Cardiac septum (tissue), 1 donor: ENCODE measurements at regions of chr11 and their contacts with region 1.

Region 1: DNA sequence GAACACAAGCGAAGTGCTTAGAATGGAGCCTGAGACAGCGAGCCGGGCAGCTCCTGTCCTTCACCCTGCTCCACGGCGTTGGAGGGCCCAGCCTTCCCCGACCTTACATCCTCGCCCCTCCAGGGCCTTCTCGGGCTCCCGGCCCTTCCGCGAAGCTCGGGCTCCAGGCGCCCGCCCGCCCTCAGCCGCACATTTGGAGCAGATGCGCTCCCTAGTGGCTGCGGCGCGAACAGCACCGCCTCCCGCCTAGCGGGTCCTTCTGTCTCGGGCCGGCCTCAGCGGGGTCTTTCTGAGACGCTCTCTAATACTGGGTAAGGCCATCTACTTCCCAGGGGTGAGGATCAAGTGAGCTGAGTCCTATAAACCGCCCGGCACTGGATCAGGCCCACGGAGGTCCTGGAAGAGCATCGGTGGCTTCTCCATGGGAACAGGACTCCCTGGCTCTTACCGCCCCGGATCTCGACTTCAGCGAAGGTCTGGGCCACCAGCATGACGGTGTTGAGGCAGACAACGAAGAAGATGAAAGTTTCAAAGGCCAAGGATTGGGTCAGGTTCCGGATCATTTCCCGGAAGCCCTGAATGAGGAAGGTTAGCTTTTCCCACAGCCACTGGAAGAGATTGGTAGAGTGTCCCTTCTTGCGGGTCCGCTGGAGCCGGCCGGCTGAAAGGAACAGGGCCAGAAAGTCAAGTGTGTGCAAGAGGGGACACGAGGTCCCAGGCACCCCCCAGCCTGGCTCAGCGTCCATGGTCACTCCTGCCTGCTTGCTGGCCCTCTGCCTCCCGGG is 3.7 kb downstream of the CATSPER1 start:
- DNase-seq: peak; percentile 87

Region 2: GRCh38 chr11:65988791-65989592 is 33.6 kb before region 1 on chr11:
- intact Hi-C with region 1: loop called (anchors 2 kb)
- DNase-seq: peak; percentile 89

Region 3: GRCh38 chr11:66136752-66137123 is 114.1 kb after region 1 on chr11:
- intact Hi-C with region 1: no loop called
- DNase-seq: no peak